ENCODE measurements at regions of chr1 and their contacts with region 1.

Region 1: DNA sequence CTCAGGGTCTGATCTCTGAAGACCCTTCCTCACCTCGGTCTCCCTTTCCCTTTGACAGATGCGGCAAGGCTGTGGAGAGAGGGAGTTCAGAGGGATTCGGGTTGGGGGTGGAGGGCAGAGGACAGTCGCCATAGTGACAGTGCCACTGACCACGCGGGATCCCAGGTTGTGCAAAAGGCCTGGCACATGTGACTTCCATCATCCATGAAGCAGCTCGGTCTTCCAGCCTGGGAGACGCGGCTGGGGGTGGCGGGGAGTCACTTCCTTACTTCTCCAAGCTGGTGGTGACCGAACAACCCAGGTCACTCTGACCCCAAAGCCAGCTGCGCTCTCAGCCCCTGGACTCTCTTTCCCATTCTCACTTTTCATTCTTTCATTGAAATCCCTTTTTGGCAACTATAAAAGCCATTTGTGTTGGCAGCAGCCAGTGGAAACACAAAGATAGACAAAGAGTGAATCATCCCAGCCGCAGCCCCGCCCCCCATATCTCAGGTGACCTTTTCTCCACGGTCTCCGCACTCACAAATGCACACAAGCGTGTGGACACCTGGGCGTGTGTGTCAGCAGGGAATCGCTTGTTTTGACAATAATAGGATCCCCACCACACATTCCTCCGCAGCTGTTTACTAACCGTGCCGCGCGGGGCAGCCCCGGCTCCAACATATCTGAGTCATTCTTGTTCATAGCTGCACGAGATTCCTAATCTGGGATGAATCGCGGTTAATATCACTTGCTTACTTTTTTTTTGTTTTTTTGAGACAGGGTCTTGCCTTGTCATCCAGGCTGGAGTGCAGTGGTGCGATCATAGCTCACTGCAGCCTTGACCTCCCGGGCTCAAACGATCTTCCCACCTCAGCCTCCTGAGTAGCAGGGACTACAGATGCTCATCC is 68.3 kb downstream of the DHRS3 start:
- DNase-seq: peak; percentile 98
- ATAC-seq: peak; percentile 96
- H3K4me3 ChIP-seq: peak overlapping the region; percentile 25; the same call in 1 of the 2 replicates
- H3K27ac ChIP-seq: peak overlapping the region; percentile 81
- H3K4me1 ChIP-seq: peaks cover 18% of the 10 kb centered on the region
- H3K27me3 ChIP-seq: no peaks in the 10 kb centered on the region
- CTCF ChIP-seq: no peak

Region 2: DNA sequence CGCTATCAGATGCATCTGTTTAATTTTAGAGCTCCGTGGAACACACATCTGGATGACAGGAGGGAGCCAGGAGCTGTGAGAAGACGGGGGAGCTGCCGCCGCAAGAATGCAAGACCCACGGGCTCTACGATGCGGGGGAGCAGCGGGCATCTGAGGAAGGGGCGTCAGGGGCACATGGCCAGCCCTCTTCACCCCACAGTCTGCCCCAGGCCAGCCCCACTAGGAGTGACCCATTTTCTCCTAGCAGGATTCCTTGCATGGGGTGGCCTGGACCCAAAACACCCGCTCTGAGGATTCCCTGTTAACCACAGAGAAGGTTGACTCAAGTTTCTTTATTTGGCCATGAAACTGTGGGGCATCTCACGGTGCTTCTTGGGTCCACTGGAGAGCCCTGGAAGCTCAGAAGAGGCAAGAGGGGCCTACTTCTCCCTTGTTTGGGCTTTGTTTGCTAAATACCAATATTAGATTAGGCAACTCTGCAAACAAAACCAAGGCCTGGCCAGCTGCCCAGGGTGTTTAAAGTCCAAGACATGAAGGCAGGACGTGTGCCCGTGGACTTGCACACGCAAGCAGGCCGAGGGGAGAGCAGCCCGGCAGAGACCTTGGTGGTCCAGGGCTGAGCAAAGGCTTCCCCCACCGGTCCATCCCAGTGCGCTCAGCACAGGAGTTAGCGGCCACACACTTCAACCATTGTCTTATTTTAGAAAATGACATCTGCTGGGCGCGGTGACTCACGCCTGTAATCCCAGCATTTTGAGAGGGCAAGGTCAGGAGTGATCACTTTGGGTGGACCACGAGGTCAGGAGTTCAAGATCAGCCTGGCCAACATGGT is 21.5 kb before region 1 on chr1:
- CTCF ChIA-PET with region 1: no interaction called
- POLR2A ChIA-PET with region 1: interaction called, 5 read pairs
- intact Hi-C with region 1: loop called (anchors 1 kb)
- DNase-seq: peak; percentile 89
- ATAC-seq: peak; percentile 91
- H3K4me3 ChIP-seq: no peak overlapping the region; the same call in 1 of the 2 replicates
- H3K27ac ChIP-seq: peak overlapping the region; percentile 70
- H3K4me1 ChIP-seq: peaks cover 32% of the 10 kb centered on the region
- H3K27me3 ChIP-seq: no peaks in the 10 kb centered on the region
- CTCF ChIP-seq: no peak

Region 3: GRCh38 chr1:12596007-12596821 is 46.5 kb after region 1 on chr1:
- CTCF ChIA-PET with region 1: no interaction called
- POLR2A ChIA-PET with region 1: no interaction called
- intact Hi-C with region 1: loop called (anchors 1 kb)
- DNase-seq: peak; percentile 92
- ATAC-seq: peak; percentile 72
- H3K4me3 ChIP-seq: peak overlapping the region; percentile 62
- H3K27ac ChIP-seq: peak overlapping the region; percentile 98
- H3K4me1 ChIP-seq: peaks cover 55% of the 10 kb centered on the region
- H3K27me3 ChIP-seq: no peaks in the 10 kb centered on the region
- CTCF ChIP-seq: no peak